ENCODE measurements at regions of chr3 and their contacts with region 1.

Region 1: GRCh38 chr3:182909318-182910040 is 70.9 kb downstream of the DCUN1D1 start:
- DNase-seq: peak; percentile 30
- ATAC-seq: peak; percentile 24
- H3K4me3 Mint-ChIP-seq: no peak overlapping the region
- H3K27ac Mint-ChIP-seq: peak overlapping the region; percentile 42
- H3K4me1 Mint-ChIP-seq: peaks cover 46% of the 10 kb centered on the region
- H3K27me3 Mint-ChIP-seq: no peaks in the 10 kb centered on the region
- CTCF ChIP-seq: peak; percentile 80

Region 2: DNA sequence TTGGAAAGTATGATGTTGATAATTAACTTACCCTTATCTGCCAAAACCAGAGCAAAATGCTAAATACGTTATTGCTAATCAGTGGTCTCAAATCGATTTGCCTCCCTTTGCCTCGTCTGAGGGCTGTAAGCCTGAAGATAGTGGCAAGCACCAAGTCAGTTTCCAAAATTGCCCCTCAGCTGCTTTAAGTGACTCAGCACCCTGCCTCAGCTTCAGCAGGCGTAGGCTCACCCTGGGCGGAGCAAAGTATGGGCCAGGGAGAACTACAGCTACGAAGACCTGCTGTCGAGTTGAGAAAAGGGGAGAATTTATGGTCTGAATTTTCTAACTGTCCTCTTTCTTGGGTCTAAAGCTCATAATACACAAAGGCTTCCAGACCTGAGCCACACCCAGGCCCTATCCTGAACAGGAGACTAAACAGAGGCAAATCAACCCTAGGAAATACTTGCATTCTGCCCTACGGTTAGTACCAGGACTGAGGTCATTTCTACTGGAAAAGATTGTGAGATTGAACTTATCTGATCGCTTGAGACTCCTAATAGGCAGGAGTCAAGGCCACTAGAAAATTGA is 11.1 kb after region 1 on chr3:
- CTCF ChIA-PET with region 1: interaction called, 16 read pairs
- POLR2A ChIA-PET with region 1: interaction called, 3 read pairs
- intact Hi-C with region 1: no loop called
- DNase-seq: no peak
- ATAC-seq: no peak
- H3K4me3 Mint-ChIP-seq: no peak overlapping the region
- H3K27ac Mint-ChIP-seq: no peak overlapping the region
- H3K4me1 Mint-ChIP-seq: peaks cover 1% of the 10 kb centered on the region
- H3K27me3 Mint-ChIP-seq: no peaks in the 10 kb centered on the region
- CTCF ChIP-seq: no peak

Region 3: DNA sequence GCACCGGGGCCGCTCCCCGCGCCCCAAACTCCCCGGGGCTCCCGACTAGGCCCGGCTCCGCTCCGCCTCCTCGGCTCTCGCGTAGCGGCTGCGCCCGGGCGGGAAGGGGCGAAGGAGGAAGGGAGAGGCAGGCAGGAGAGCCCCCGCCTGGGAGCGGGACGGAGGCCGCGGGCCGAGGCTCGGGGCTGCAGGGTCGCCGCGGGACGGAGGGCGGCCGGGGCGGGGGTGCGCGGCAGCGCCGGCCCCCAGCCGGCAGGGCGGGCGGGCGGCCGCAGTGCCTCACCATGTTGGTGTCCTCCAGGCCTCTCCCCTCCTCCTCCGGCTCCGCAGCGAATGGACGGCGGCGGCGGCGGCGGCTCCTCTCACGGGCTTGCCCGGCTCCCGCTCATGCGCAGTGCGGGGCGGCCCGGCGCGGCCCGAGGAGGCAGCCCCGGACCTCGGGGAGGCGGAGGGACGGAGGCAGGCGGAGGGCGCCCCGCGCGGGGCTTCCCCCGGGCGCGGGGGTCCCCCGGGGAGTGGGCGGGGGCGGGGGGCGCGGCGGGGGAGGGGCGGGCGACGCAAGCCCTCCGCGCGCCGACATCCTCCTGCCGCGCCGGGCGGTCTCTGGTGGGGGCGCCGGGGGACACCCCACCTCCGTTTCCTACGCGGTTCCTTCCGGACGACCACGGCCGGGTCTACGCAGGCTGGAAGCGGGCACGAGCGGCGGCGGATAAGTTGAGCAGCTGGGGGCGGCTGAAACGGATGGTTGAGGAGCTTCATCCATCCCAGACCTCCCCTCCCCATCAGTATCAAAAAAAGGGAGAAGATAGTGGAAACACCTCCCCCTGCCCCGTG is 70.9 kb after region 1 on chr3 and contains the start of gene DCUN1D1:
- CTCF ChIA-PET with region 1: no interaction called
- POLR2A ChIA-PET with region 1: no interaction called
- intact Hi-C with region 1: no loop called
- DNase-seq: peak; percentile 87
- ATAC-seq: peak; percentile 94
- H3K4me3 Mint-ChIP-seq: peak within 1 kb of the TSS; percentile 89
- H3K27ac Mint-ChIP-seq: peak within 1 kb of the TSS; percentile 87
- H3K4me1 Mint-ChIP-seq: peaks cover 24% of the 10 kb centered on the region
- H3K27me3 Mint-ChIP-seq: no peaks in the 10 kb centered on the region
- CTCF ChIP-seq: no peak
- total RNA-seq, gene DCUN1D1: 39.6 to 43.2 TPM

Region 4: DNA sequence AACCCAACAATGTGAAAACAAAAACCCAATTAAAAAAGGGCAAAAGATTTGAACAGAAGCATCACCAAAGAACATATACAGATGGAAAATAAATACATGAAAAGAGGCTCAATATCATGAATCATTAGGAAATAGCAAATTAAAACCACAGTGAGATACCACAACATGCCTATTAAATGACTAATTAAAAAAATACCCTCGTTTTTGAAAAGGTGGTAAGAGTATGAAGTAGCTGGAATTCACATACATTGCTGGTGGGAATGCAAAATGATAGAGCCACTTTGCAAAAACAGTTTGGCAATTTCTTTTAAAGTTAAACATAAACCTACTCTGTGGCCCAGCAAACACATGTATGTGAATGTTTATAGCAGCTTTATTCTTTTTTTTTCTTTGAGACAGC is 419.3 kb after region 1 on chr3:
- CTCF ChIA-PET with region 1: no interaction called
- POLR2A ChIA-PET with region 1: no interaction called
- intact Hi-C with region 1: no loop called
- DNase-seq: no peak
- ATAC-seq: peak; percentile 22
- H3K4me3 Mint-ChIP-seq: no peak overlapping the region
- H3K27ac Mint-ChIP-seq: no peak overlapping the region
- H3K4me1 Mint-ChIP-seq: peaks cover 29% of the 10 kb centered on the region
- H3K27me3 Mint-ChIP-seq: no peaks in the 10 kb centered on the region
- CTCF ChIP-seq: no peak

Measured in activated CD8-positive, alpha-beta T cell treated with anti-CD3 and anti-CD28 coated beads for 36 hours (primary cell).